CD4-positive, alpha-beta T cell (primary cell): ENCODE measurements at regions of chr7 and their contacts with region 1.

Region 1: DNA sequence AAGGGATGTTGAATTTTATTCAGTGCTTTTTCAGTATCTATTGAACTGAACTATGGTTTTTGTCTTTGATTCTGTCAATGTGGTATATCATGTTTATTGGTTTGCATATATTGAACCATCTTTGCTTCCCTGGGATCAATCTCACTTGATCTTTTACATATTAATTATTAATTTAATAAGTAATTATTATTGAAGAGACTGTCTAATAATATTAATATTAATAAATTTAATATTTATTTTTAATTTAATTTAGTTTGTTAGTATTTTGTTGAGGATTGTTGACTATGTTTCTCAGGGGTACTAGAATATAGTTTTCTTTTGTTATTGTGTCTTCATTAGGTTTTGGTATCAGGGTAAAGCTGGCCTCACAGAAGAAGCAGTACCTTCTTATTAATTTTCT is 26.5 kb upstream of the TRA2A start:
- DNase-seq: no peak
- ATAC-seq: no peak
- H3K4me3 ChIP-seq: no peak overlapping the region
- H3K4me3 Mint-ChIP-seq: no peak overlapping the region
- H3K27ac ChIP-seq: no peak overlapping the region
- H3K27ac Mint-ChIP-seq: no peak overlapping the region
- H3K4me1 ChIP-seq: no peaks in the 10 kb centered on the region
- H3K4me1 Mint-ChIP-seq: no peaks in the 10 kb centered on the region
- H3K27me3 ChIP-seq: no peaks in the 10 kb centered on the region
- H3K27me3 Mint-ChIP-seq: peaks cover 12% of the 10 kb centered on the region
- CTCF ChIP-seq: no peak

Region 2: DNA sequence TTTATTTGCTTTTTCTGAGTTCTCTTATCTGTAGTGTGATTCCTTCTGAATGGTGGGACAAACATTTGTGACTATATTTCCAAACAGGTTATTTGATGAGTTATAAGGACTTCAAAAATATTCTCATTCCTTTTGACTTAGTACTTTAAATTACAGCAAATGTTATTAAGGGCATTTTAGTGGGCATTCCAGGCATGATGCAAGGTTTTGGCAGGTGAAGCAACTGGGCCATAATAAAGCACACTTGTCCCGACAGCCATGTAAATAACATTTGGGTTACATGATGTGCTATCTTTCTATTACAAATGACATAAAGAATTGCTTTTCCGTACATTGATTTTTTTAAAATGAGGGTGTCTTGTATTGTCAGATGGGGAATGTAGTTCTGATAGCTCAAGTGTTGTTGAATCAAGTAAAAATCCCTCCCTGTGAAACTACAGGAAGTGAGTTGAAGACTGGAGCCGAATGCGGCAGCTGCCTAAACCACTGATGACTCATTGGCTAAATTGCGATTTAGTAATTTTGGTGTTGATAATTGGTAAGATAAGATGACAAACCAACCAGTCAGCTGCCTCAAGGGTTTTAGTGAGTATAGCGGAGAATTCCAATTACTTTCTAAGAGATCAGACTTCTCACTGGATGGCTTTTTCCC is 494.4 kb after region 1 on chr7:
- CTCF ChIA-PET with region 1: no interaction called
- POLR2A ChIA-PET with region 1: no interaction called
- intact Hi-C with region 1: loop called in 1 of 2 experiments (anchors 10 kb)
- DNase-seq: peak in 1 of 14 experiments; percentile 19
- ATAC-seq: no peak
- H3K4me3 ChIP-seq: no peak overlapping the region
- H3K4me3 Mint-ChIP-seq: no peak overlapping the region
- H3K27ac ChIP-seq: no peak overlapping the region
- H3K27ac Mint-ChIP-seq: no peak overlapping the region
- H3K4me1 ChIP-seq: no peaks in the 10 kb centered on the region
- H3K4me1 Mint-ChIP-seq: no peaks in the 10 kb centered on the region
- H3K27me3 ChIP-seq: peaks cover 0 to 4% of the 10 kb centered on the region in 2 experiments
- H3K27me3 Mint-ChIP-seq: peaks cover 27% of the 10 kb centered on the region
- CTCF ChIP-seq: no peak